ENCODE measurements at regions of chr13 and their contacts with region 1.

Region 1: DNA sequence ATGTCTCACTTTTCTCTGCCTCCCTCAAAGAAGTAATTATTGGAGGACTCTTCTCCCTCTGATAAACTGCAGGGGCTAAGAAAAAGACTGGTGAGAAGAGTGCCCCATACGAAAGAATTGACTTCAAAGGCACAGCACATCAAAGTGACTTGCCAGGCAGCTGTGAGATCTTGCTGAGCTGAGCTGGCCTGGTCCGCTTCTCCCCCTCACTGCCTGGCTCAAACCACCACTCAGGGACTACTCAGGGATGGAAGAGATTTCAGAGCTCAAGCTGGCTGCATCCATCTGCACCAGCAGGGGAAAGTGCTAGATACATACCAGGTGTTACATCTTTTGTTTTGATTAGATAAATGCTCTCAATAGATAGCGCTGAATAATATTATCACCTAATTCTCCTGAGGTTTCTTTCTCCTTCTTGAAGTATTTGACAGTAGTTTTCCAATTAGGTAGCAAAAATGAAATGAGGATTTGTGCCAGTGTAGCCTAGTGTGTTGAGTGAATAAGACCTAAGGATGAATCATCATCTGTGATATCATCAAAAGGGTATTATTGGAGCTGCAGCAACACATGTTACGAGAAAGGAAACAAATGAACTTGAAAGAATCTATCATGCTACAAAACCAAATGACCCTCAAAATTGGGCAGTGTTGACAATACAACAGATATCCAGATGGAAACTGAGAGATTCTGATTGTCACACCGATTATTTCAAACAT is 379.8 kb downstream of the TBC1D4 start:
- DNase-seq: no peak
- H3K4me3 ChIP-seq: no peak overlapping the region
- H3K27ac ChIP-seq: no peak overlapping the region
- H3K4me1 ChIP-seq: no peaks in the 10 kb centered on the region
- H3K27me3 ChIP-seq: no peaks in the 10 kb centered on the region
- CTCF ChIP-seq: no peak
- EP300 ChIP-seq: no peak
- POLR2A ChIP-seq: no peak

Region 2: DNA sequence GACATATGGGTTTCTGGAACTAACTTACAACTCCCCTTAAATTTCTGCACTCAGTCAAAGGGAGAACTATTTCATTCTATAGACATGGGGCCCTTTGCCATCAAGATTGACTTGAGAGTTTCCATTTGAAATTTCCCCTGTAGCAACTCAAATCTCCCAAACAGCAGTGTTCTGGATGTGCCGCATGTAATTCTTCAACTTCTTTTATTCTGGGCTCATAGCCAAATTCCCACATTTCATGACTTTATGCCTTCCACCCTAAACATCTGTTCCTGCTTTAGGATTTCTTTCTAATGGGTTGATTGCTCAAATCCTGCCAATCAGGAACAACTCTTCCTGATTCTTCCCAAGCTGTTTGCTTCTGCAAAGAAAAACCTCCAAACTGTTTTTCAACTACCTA is 43.8 kb after region 1 on chr13:
- in situ Hi-C with region 1: no loop called
- intact Hi-C with region 1: loop called (anchors 1 kb)
- DNase-seq: no peak
- H3K4me3 ChIP-seq: no peak overlapping the region
- H3K27ac ChIP-seq: no peak overlapping the region
- H3K4me1 ChIP-seq: no peaks in the 10 kb centered on the region
- H3K27me3 ChIP-seq: no peaks in the 10 kb centered on the region
- CTCF ChIP-seq: no peak
- EP300 ChIP-seq: no peak
- POLR2A ChIP-seq: no peak